GM23248 (cell line): ENCODE measurements at regions of chr18 and their contacts with region 1.

Region 1: DNA sequence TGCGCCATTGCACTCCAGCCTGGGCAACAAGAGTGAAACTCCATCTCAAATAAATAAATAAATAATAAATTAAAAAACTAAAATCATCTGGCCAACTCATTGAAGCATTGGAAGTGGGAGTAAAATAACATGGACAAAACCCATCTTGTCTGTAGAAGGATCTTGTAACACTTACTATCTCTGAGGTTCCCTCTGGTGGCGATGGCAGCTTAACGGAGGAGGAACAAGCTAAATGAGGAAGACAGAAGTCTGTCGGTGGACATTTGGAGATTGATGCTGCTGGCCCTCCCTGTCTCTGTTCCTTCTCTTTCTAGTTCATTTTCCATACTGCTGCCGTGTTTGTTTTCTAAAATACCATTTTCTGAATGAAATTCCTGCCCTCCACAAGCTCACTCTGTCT is 43.4 kb downstream of the ZCCHC2 start:
- DNase-seq: peak; percentile 39
- H3K4me3 ChIP-seq: no peak overlapping the region
- H3K27ac ChIP-seq: no peak overlapping the region
- H3K4me1 ChIP-seq: no peaks in the 10 kb centered on the region
- H3K27me3 ChIP-seq: no peaks in the 10 kb centered on the region

Region 2: DNA sequence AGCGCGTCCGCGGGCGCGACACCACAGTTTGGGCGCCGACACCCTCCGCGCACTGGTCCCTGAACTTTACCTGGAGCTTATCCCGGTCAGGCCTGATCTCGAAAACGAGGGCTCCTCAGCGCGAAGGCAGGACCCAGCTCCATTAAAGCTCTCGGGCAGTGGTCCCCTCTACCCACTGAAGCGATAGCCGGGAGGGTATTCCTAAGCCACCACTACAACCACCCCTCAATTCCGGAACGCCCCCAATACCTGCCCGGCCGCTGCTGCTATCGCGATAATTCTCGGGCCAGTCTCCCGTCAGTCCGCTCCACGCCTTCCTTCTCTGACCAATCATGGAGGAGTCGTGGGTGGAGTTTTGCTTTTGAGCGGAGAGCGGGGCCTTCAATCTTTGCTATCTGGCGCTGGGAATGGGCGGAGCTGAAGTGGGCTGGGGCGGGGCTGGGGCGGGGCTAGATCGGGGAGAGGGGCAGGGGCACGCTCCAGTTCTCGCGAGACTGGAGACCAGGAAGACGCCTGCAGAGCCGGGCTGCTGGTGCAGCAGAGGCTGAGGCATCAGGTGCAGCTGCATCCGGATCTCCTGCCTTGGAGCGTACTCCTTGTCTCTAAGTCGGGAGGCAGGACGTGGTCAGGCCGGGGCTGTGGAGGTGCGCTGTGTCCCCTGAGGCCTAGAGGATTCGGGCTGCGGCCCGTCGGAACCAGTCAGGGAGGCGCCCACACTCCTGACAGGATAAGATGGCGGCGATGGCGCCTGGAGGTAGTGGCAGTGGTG is 379.2 kb before region 1 on chr18 and contains the starts of genes PIGN and RELCH:
- in situ Hi-C with region 1: loop called (anchors 25 kb)
- DNase-seq: peak; percentile 99
- H3K4me3 ChIP-seq: peak within 1 kb of the TSS; percentile 100
- H3K27ac ChIP-seq: peak within 1 kb of the TSS; percentile 78
- H3K4me1 ChIP-seq: peaks cover 19% of the 10 kb centered on the region
- H3K27me3 ChIP-seq: no peaks in the 10 kb centered on the region
- total RNA-seq, gene PIGN: 22.3 and 27.2 TPM in 2 replicates
- total RNA-seq, gene RELCH: 31.6 and 38.6 TPM in 2 replicates

Region 3: DNA sequence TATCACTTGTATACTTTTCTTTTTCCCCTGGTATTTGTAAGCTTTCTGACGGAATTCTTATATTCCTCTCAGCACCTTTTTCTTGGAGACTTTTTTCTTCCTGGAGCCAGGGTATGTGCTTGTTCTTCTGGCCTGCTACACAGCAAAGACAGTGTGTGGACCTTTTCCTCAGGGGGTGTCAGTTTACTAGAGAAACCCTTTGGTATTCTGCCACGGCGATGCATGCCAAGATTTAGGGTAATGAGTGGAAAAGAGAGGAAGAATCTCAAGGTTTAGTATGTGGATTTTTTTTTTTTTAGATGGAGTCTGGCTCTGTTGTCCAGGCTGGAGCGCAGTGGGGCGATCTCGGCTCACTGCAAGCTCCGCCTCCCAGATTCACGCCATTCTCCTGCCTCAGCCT is 301.3 kb after region 1 on chr18:
- in situ Hi-C with region 1: no loop called
- DNase-seq: no peak
- H3K4me3 ChIP-seq: no peak overlapping the region
- H3K27ac ChIP-seq: no peak overlapping the region
- H3K4me1 ChIP-seq: no peaks in the 10 kb centered on the region
- H3K27me3 ChIP-seq: no peaks in the 10 kb centered on the region